ENCODE measurements at regions of chr6 and their contacts with region 1.

Region 1: DNA sequence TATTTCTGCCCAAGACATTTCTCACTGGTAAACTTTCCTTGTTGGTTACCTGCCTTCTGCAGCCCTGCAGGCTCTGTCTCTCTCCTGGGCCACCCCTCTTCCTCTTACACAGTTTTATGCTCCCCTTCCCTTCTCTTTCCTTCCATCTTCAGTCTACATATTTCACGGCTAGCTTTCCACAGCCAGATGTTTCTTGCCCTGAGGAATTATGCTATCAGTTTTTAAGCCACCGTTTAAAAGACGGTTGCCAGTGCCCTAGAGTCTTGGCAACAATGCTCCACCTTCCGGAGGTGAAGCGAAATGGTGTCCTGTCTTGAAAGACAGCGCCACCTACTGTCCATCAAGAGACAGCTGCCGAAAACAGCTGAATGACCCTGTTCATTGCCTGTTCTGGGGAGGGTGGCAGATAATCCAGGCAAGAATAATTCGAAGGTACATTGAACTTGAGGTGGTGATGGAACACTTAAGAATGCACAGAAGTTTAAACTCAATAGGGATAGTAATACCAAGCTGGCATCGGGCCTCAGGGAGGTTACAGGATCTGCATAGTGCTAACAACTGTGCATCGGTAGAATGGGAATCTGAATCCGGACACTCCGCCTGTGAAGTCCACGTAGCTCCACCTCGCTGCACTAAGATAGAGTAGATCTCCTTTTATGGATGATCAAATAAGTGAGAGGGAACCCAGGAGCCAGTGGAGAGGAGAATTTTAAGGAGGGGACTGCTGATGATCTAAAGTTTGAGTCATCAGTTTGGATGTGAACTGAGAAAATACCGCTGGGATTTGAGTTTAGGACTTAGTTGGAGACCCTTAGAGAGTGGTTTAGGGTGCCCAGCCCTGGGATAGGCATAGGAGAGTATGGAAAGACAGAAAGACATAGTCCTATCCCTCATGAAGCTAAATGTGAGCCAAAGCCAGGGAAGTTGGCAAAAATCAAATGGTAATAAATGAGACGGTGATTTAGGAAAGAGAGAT is 4.8 kb upstream of the TRIM40 start:
- DNase-seq: peak; percentile 81 to 89 (median 86)
- ATAC-seq: peak; percentile 97
- H3K4me3 ChIP-seq: no peak overlapping the region
- H3K27ac ChIP-seq: no peak overlapping the region
- H3K4me1 ChIP-seq: peaks cover 4 to 8% of the 10 kb centered on the region in 2 experiments; a peak in 4 of 5 replicates
- H3K27me3 ChIP-seq: peaks cover 8 to 30% of the 10 kb centered on the region in 2 experiments; a peak in 3 of 5 replicates
- CTCF ChIP-seq: peak; percentile 100
- EP300 ChIP-seq: peak; percentile 9; the same call in 1 of the 2 replicates
- POLR2A ChIP-seq: no peak
- RAD21 ChIP-seq: peak; percentile 89 to 96

Region 2: DNA sequence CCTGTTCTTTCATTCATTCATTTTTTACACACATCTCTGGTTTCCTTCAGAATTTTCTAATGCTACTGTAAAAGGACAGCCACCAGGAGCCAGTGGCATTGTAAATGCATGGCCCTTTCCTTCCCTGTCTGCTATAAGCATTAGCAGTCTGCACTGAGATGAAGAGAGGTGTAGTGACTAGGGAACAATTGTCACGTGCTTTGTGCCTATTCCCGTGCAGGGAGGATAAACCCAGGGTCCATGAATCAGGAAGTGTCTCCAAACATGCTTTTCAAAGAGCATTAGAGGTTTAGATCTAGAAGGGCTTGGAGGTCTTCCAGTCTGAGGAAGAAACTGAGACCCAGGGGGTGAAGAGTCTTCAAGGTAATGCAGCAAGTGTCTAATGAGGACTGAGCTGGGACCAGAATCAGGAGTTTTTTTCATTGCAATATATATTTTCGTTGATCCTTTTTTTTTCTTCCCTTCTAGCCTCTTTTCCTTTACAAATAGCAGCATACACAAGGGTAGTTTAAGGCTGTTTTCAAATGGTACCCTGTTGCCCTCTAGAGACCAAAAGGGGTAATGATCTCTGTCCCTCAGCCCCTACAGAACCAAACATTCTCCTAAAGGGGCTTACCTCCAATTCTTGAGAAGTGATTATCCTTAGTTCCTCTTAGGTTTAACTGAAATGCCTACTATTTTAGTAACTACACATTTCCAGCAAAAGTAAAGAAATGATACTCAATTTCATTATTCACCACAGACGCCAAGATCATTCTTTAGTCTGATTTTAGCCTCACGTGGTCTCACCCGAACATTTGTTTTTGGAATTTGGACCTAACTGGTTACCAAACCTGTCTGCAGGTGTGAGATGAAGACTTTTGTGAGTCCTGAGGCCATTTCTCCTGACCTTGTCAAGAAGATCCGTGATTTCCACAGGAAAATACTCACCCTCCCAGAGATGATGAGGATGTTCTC is 38.8 kb after region 1 on chr6:
- CTCF ChIA-PET with region 1: interaction called, 3 read pairs
- POLR2A ChIA-PET with region 1: no interaction called
- in situ Hi-C with region 1: no loop called
- intact Hi-C with region 1: loop called (anchors 2 kb)
- DNase-seq: peak; percentile 59 to 73 (median 65)
- ATAC-seq: peak; percentile 97
- H3K4me3 ChIP-seq: no peak overlapping the region
- H3K27ac ChIP-seq: no peak overlapping the region
- H3K4me1 ChIP-seq: peaks cover 0 to 8% of the 10 kb centered on the region in 2 experiments; a peak in 1 of 5 replicates
- H3K27me3 ChIP-seq: peaks cover 10 to 27% of the 10 kb centered on the region in 2 experiments
- CTCF ChIP-seq: peak; percentile 73 to 94 (median 82)
- EP300 ChIP-seq: no peak
- POLR2A ChIP-seq: no peak
- RAD21 ChIP-seq: peak; percentile 82 to 92